ENCODE measurements at regions of chr22 and their contacts with region 1.

Region 1: DNA sequence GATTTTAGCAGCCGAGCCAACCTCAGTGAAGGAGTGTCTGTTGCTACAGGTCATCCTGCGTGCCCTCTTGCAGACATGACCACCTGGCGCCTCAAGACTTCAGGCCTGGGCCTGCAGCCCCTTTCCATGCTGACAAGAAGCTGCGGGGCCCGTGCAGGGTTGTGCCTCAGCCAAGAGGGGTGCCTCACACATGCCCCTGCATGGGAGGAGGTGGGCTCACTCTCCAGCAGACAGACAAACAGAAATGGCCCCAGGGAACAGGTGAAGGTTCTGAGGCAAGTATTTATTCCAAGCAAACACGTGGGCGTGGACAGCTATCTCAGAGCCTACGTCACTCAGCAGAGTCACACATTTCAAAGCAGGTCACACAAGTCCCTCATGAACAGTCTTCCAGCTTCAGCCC is 5.9 kb upstream of the SYCE3 start:
- DNase-seq: no peak
- ATAC-seq: no peak
- H3K4me3 Mint-ChIP-seq: no peak overlapping the region
- H3K27ac Mint-ChIP-seq: no peak overlapping the region
- H3K4me1 Mint-ChIP-seq: peaks cover under 1% of the 10 kb centered on the region
- H3K27me3 Mint-ChIP-seq: no peaks in the 10 kb centered on the region
- CTCF ChIP-seq: no peak

Region 2: DNA sequence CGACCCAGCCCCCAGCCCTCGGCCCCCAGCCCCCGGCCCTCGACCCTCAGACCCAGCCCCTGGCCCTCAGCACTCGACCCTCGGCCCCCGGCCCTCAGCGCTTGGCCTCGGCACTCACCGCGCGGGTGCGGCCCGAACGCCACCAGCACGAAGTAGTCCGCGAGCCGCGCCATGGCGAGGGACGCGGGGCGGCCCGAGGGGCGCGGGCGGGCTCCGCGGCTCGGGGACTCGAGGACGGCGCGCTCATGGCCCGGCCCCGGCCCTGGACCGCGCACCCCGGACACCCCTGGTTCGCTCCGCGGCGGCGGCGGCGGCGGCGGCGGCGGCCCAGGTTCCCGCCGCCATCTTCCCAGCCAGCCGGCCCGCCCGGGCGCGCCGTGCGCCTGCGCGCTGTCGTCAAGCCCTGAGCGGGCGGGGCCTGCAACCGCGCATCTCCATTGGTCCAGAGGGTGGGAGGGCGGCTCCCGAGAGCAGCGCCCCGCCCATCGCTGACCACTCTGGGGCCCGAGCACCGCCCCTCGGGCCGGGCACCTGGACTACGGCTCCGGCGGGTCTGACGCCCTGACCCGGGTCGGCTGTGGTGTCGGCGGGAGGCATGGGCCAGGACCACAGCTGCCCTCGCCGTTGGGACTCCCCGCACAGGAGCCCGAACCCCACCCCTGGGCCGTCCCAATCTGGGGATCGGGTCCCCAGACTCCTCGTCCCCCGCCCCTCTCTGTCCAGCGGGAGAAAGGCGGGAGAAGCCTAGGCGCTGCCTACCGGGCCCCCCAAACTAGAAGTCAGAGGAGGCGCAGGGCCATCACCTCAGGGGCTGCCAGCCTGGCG is 93.7 kb before region 1 on chr22 and contains the start of gene SBF1:
- CTCF ChIA-PET with region 1: no interaction called
- POLR2A ChIA-PET with region 1: no interaction called
- intact Hi-C with region 1: no loop called
- DNase-seq: peak; percentile 91
- ATAC-seq: peak; percentile 76
- H3K4me3 Mint-ChIP-seq: peak within 1 kb of the TSS; percentile 99
- H3K27ac Mint-ChIP-seq: peak within 1 kb of the TSS; percentile 95
- H3K4me1 Mint-ChIP-seq: peaks cover 46% of the 10 kb centered on the region
- H3K27me3 Mint-ChIP-seq: peaks cover 1% of the 10 kb centered on the region
- CTCF ChIP-seq: no peak
- total RNA-seq, gene SBF1: 120 TPM

Region 3: DNA sequence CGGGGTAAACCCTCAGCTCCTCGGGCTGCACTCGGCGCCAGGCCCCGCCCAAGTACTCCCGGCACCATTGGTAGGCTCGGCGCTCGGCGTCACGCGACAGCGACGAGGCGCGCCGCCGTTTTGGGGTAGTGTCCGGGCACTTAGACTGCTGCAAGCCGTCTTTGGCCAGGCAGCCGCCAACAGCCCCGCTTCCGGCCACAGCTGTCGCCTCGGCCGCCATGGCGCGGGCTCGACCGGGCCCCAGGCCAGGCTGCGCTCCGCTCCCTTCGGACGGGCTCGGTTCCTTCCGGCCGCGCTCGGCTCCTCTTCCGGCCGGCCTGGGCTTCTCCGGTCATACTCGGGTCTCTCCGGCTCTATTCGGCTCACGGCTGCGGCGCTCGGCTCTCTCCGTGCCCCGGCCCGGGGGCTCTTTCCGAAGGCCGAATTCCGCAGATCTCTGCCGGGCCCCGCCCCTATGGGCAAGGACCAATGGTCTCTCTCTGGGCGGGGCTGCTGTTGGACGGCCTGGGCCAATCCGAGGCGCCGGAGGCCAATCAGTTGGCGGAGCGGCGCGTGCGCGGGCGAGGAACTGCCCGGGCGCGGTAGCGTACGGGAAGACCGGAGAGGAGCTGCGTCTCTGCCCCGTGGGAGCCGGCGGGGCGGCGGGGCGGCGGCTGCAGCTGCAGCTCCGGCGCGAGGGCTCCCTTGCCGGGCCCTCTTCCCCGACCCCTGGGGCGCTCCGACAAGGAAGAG is 14.1 kb after region 1 on chr22 and contains the start of gene CHKB:
- CTCF ChIA-PET with region 1: interaction called, 18 read pairs
- POLR2A ChIA-PET with region 1: interaction called, 12 read pairs
- intact Hi-C with region 1: no loop called
- DNase-seq: peak; percentile 99
- ATAC-seq: peak; percentile 97
- H3K4me3 Mint-ChIP-seq: peak within 1 kb of the TSS; percentile 92
- H3K27ac Mint-ChIP-seq: peak within 1 kb of the TSS; percentile 89
- H3K4me1 Mint-ChIP-seq: peaks cover 24% of the 10 kb centered on the region
- H3K27me3 Mint-ChIP-seq: no peaks in the 10 kb centered on the region
- CTCF ChIP-seq: no peak
- total RNA-seq, gene CHKB: 55.6 to 60.3 TPM

Region 4: GRCh38 chr22:50612528-50613221 is 44.1 kb after region 1 on chr22:
- CTCF ChIA-PET with region 1: no interaction called
- POLR2A ChIA-PET with region 1: no interaction called
- intact Hi-C with region 1: no loop called
- DNase-seq: peak; percentile 24
- ATAC-seq: peak; percentile 89
- H3K4me3 Mint-ChIP-seq: no peak overlapping the region
- H3K27ac Mint-ChIP-seq: no peak overlapping the region
- H3K4me1 Mint-ChIP-seq: no peaks in the 10 kb centered on the region
- H3K27me3 Mint-ChIP-seq: peaks cover 14% of the 10 kb centered on the region
- CTCF ChIP-seq: no peak